Ascending aorta (tissue), 2 donors: ENCODE measurements at regions of chr15 and their contacts with region 1.

Region 1: DNA sequence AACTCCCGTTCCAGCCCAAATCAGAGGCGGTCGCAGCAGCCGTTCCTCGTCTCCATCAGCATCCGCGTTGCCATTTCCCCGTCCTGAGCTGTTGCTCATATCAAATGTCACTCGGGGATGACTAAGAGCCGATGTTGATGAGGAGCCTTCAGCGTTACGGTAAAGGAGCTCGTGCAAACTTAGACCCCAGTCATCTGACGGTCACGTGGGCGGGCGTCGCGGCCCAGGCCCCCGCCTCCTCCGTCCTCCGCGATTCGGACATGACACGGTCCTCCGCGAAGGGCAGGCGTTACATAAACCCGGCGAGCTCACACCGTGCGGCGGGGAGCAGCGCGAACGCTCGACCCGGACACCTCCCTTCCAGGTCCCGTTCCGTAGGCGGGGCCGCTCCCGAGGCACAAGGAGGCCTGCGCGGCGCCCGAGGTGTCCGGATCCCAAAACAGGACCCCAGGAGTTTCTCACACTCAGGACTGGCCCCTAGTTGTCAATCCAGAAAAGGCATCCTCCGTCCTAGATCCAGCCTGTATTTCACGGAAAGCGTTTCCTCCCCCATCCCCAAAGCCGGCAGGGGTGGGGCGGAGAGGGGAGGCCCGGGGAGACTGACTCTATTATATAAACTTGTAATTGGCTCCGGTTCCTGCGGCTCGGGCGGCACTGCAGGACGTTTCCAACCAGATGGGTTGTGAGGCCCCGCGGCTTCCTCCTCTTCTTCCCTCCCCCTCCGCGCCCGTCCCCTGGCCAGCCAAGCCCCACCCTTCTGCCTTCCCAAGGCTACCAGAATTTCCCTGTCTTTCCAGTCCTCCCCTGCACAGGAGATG is 100.0 kb upstream of the IGF1R start:
- DNase-seq: peak; percentile 65 to 87
- H3K4me3 ChIP-seq: peak overlapping the region; percentile 57 to 72
- H3K27ac ChIP-seq: peak overlapping the region; percentile 67 to 86
- H3K4me1 ChIP-seq: peaks cover 0 to 4% of the 10 kb centered on the region in 2 donors
- H3K27me3 ChIP-seq: no peaks in the 10 kb centered on the region
- CTCF ChIP-seq: peak in 1 of 3 experiments; percentile 31

Region 2: GRCh38 chr15:98342911-98343310 is 205.5 kb before region 1 on chr15:
- intact Hi-C with region 1: no loop called
- DNase-seq: no peak
- H3K4me3 ChIP-seq: no peak overlapping the region
- H3K27ac ChIP-seq: no peak overlapping the region
- H3K4me1 ChIP-seq: no peaks in the 10 kb centered on the region
- H3K27me3 ChIP-seq: no peaks in the 10 kb centered on the region
- CTCF ChIP-seq: no peak

Region 3: GRCh38 chr15:98505581-98506031 is 42.8 kb before region 1 on chr15:
- intact Hi-C with region 1: loop called (anchors 5 kb)
- DNase-seq: peak in 1 of 2 donors; percentile 87
- H3K4me3 ChIP-seq: peak overlapping the region in 1 of 2 donors; percentile 10
- H3K27ac ChIP-seq: peak overlapping the region; percentile 60 to 67
- H3K4me1 ChIP-seq: peaks cover 5 to 24% of the 10 kb centered on the region in 2 donors
- H3K27me3 ChIP-seq: no peaks in the 10 kb centered on the region
- CTCF ChIP-seq: no peak

Region 4: GRCh38 chr15:98525661-98526001 is 22.7 kb before region 1 on chr15:
- intact Hi-C with region 1: loop called (anchors 2 kb)
- DNase-seq: no peak
- H3K4me3 ChIP-seq: peak overlapping the region; percentile 14 to 31
- H3K27ac ChIP-seq: peak overlapping the region; percentile 81 to 85
- H3K4me1 ChIP-seq: peaks cover 10 to 18% of the 10 kb centered on the region in 2 donors
- H3K27me3 ChIP-seq: no peaks in the 10 kb centered on the region
- CTCF ChIP-seq: no peak